ENCODE measurements at regions of chr17 and their contacts with region 1.

Region 1: GRCh38 chr17:4583782-4584100 is 588 bp upstream of the SMTNL2 start:
- DNase-seq: peak; percentile 79
- H3K4me3 ChIP-seq: no peak overlapping the region
- H3K27ac ChIP-seq: no peak overlapping the region
- H3K4me1 ChIP-seq: peaks cover 0 to 23% of the 10 kb centered on the region in 2 experiments; a peak in 1 of 4 replicates
- H3K27me3 ChIP-seq: peaks cover 61% of the 10 kb centered on the region
- CTCF ChIP-seq: peak; percentile 39
- EP300 ChIP-seq: no peak
- RAD21 ChIP-seq: no peak

Region 2: GRCh38 chr17:4548721-4549531 is 34.8 kb before region 1 on chr17:
- CTCF ChIA-PET with region 1: no interaction called
- POLR2A ChIA-PET with region 1: no interaction called
- DNase-seq: no peak
- H3K4me3 ChIP-seq: no peak overlapping the region
- H3K27ac ChIP-seq: no peak overlapping the region
- H3K4me1 ChIP-seq: peaks cover 4 to 5% of the 10 kb centered on the region in 2 experiments; a peak in 1 of 4 replicates
- H3K27me3 ChIP-seq: no peaks in the 10 kb centered on the region
- CTCF ChIP-seq: no peak
- EP300 ChIP-seq: no peak
- RAD21 ChIP-seq: no peak

Region 3: DNA sequence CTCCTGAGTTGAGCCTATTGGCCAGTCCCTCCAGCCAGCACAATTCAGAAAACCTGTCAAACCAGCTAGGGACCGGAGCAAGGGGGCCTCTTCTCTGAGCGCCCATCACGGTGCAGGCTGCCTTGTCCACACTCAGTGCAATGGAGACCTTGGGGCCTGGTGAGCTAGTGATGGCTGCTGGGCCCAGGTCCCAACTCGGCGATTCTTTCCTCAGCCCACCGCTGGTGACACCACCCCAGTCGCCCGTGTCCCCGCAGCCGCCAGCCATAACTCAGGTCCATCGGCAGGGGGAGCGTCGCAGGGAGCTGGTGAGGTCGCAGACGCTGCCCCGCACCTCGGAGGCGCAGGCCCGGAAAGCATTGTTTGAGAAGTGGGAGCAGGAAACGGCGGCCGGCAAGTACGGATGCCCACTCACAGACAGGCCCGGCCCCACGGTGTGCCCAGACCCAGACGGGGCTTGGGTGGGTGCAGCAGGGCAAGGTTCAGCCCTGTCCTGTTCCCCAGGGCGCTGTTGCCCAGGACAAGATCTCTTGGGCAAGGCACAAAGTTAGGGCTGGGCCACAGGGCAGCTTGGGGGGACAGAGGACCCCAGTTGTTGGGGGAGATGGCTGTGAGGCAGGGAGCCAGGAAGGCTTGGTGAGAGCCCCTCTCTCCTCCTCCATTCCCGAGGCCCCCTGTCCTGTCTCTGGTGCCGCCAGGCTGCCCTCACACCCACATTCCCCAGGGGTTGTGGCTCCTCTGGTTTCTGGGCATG is 11.4 kb after region 1 on chr17:
- CTCF ChIA-PET with region 1: interaction called, 11 read pairs
- POLR2A ChIA-PET with region 1: no interaction called
- DNase-seq: peak; percentile 68
- H3K4me3 ChIP-seq: no peak overlapping the region
- H3K27ac ChIP-seq: no peak overlapping the region
- H3K4me1 ChIP-seq: peaks cover 0 to 16% of the 10 kb centered on the region in 2 experiments; a peak in 1 of 4 replicates
- H3K27me3 ChIP-seq: peaks cover 28% of the 10 kb centered on the region
- CTCF ChIP-seq: no peak; the same call in 1 of the 2 replicates
- EP300 ChIP-seq: no peak
- RAD21 ChIP-seq: no peak

Measured in SK-N-SH (cell line).